ENCODE measurements at regions of chr6 and their contacts with region 1.

Region 1: GRCh38 chr6:41846666-41847237 is 48.4 kb downstream of the USP49 start:
- DNase-seq: peak; percentile 34
- ATAC-seq: peak; percentile 95
- H3K4me3 ChIP-seq: no peak overlapping the region
- H3K27ac ChIP-seq: peak overlapping the region; percentile 41
- H3K4me1 ChIP-seq: peaks cover 2% of the 10 kb centered on the region; the same call in 1 of the 2 replicates
- H3K27me3 ChIP-seq: no peaks in the 10 kb centered on the region
- CTCF ChIP-seq: peak; percentile 79 to 82 (median 80)
- EP300 ChIP-seq: no peak
- POLR2A ChIP-seq: no peak
- RAD21 ChIP-seq: peak; percentile 85

Region 2: DNA sequence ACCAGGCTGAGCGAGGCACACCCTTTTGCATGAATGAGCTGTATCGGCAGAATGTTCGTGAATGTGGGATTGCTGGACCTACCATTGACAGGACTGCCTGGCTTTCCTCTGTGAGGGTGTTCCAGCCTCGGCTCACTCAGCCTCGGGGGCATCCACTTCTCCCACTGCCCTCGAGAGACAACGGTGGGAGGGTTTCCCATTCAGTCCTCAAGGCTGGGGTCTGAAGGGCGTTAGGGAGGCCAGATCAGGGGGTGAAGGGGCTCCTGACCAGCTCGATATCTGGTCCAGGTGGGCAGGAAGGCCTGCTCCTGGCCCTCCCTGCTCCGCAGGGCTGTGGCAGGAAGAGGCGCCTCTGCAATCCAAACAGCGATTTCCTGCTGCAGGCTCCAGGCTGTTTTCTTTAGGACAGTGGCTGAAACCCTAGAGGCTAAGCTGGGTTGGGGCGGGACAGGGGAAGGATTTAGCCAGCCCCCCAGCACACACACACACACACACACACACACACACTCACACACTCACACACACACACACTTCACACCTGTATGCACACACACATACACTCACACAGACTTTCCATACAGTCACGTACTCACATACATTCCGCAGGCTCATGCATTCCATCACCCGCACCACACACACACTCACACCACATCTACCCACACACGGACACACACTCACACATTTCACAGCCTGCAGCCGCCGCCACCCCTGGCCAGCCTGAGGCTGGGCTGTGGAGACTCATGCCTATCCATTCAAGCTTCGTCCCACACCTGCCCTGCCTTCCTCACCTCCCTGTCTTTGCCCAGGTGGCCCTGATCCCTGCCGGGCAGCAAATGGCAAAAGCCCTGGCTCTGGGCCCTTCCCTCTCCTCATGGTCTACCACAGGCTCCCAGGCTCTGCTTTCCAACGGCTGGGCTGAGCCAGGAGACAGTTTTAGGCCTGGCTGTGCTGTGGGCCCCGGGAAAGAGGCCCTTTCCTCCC is 190.8 kb before region 1 on chr6:
- CTCF ChIA-PET with region 1: no interaction called
- POLR2A ChIA-PET with region 1: no interaction called
- RAD21 ChIA-PET with region 1: no interaction called
- SMC1A ChIA-PET with region 1: no interaction called
- in situ Hi-C with region 1: no loop called
- intact Hi-C with region 1: no loop called
- DNase-seq: no peak
- ATAC-seq: no peak
- H3K4me3 ChIP-seq: no peak overlapping the region
- H3K27ac ChIP-seq: no peak overlapping the region
- H3K4me1 ChIP-seq: no peaks in the 10 kb centered on the region
- H3K27me3 ChIP-seq: peaks cover 3 to 5% of the 10 kb centered on the region in 2 experiments; a peak in 3 of 4 replicates
- CTCF ChIP-seq: no peak
- EP300 ChIP-seq: no peak
- POLR2A ChIP-seq: no peak
- RAD21 ChIP-seq: no peak

Region 3: GRCh38 chr6:41858703-41859102 is 12.0 kb after region 1 on chr6:
- CTCF ChIA-PET with region 1: interaction called, 20 read pairs
- POLR2A ChIA-PET with region 1: no interaction called
- RAD21 ChIA-PET with region 1: no interaction called
- SMC1A ChIA-PET with region 1: interaction called, 8 read pairs
- in situ Hi-C with region 1: no loop called
- intact Hi-C with region 1: no loop called
- DNase-seq: no peak
- ATAC-seq: no peak
- H3K4me3 ChIP-seq: no peak overlapping the region
- H3K27ac ChIP-seq: no peak overlapping the region
- H3K4me1 ChIP-seq: no peaks in the 10 kb centered on the region
- H3K27me3 ChIP-seq: no peaks in the 10 kb centered on the region
- CTCF ChIP-seq: no peak
- EP300 ChIP-seq: no peak
- POLR2A ChIP-seq: no peak
- RAD21 ChIP-seq: no peak

Region 4: GRCh38 chr6:41936073-41936837 is 89.5 kb after region 1 on chr6:
- CTCF ChIA-PET with region 1: interaction called, 64 read pairs
- POLR2A ChIA-PET with region 1: interaction called, 4 read pairs
- RAD21 ChIA-PET with region 1: interaction called, 3 read pairs
- SMC1A ChIA-PET with region 1: interaction called, 6 read pairs
- in situ Hi-C with region 1: no loop called
- intact Hi-C with region 1: loop called (anchors 1 kb)
- DNase-seq: peak; percentile 53
- ATAC-seq: peak; percentile 83
- H3K4me3 ChIP-seq: no peak overlapping the region
- H3K27ac ChIP-seq: peak overlapping the region; percentile 60
- H3K4me1 ChIP-seq: peaks cover 43% of the 10 kb centered on the region
- H3K27me3 ChIP-seq: no peaks in the 10 kb centered on the region
- CTCF ChIP-seq: peak; percentile 84 to 94 (median 91)
- EP300 ChIP-seq: no peak
- POLR2A ChIP-seq: peak; percentile 35
- RAD21 ChIP-seq: peak; percentile 68

Region 5: DNA sequence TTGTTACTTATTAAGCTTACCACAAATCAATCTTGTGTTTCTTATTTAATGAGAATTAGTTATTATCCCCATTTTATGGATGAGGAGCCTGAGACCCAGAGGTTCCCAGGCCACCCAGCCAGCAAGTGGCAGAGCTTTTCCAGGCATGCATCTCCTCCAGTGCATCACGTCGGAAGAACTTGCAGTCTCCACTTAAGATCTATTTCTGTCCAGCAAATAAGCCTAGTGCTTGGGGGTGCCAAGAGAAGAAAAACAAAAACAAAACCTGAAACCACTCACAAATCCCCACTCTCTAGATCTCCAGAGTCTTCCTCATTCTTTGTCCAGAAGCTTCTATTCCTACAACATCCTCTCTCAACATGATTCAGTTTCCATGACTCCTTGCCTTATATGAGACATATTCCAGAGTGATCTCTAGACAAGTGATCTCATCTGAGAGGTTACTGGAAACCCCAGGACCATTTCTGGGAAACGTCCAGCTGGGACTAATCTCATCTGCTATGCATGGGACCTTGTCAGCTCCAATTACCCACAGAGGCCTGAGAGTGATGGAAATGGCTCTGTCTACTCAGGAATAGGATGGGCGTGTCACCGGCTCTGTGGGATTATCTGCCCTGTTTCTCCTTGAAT is 343.9 kb after region 1 on chr6:
- CTCF ChIA-PET with region 1: no interaction called
- POLR2A ChIA-PET with region 1: no interaction called
- RAD21 ChIA-PET with region 1: no interaction called
- SMC1A ChIA-PET with region 1: no interaction called
- in situ Hi-C with region 1: no loop called
- intact Hi-C with region 1: no loop called
- DNase-seq: no peak
- ATAC-seq: no peak
- H3K4me3 ChIP-seq: no peak overlapping the region
- H3K27ac ChIP-seq: no peak overlapping the region
- H3K4me1 ChIP-seq: no peaks in the 10 kb centered on the region; the same call in 1 of the 2 replicates
- H3K27me3 ChIP-seq: no peaks in the 10 kb centered on the region
- CTCF ChIP-seq: no peak
- EP300 ChIP-seq: no peak
- POLR2A ChIP-seq: no peak
- RAD21 ChIP-seq: no peak